GM12878 (cell line): ENCODE measurements at regions of chr7 and their contacts with region 1.

Region 1: GRCh38 chr7:82044497-82045080 is 274.7 kb upstream of the HGF start:
- DNase-seq: no peak
- ATAC-seq: peak; percentile 56
- H3K4me3 ChIP-seq: no peak overlapping the region
- H3K27ac ChIP-seq: no peak overlapping the region
- H3K4me1 ChIP-seq: no peaks in the 10 kb centered on the region
- H3K27me3 ChIP-seq: no peaks in the 10 kb centered on the region
- CTCF ChIP-seq: peak; percentile 42 to 75 (median 47); a peak in 5 of 6 replicates
- EP300 ChIP-seq: no peak
- POLR2A ChIP-seq: no peak
- RAD21 ChIP-seq: peak; percentile 85

Region 2: DNA sequence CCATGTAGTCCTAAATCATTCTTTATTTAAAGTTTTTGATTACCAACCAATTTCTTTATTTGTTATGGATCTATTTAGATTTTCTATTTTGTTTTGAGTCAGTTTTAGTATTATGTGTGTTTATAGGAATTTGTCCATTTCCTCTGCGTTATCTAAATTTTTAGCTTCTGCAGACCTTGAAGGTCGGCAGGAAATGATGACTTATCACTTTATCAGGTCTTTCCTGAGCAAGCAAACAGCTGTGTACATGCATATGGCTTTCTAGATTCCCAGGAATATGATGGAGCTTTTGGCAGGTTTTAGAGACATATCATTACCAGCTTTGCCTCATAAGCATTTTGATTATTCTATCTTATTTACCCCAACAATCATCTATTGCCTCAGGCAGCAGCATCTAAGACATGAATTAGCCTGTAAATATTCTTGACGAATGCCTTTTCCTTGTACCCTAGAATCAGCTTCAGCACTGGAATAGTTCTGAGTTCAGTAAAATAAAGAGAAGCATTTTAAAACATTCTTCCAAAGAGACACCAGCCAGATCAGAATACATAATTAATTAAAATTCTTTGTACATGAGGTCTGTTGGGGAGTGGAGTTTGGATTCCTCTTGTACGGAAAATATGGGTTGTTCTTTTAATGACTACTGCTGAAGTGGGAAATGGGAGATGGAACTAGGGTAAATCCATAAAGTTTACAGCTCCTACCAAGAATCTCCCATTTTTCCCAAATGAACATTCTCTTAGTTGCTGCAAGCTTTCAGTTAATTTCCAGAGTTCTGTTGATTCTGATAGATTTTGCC is 716.9 kb before region 1 on chr7:
- CTCF ChIA-PET with region 1: no interaction called
- POLR2A ChIA-PET with region 1: no interaction called
- RAD21 ChIA-PET with region 1: no interaction called
- SMC1A ChIA-PET with region 1: no interaction called
- in situ Hi-C with region 1: no loop called
- intact Hi-C with region 1: no loop called
- DNase-seq: no peak
- ATAC-seq: no peak
- H3K4me3 ChIP-seq: no peak overlapping the region
- H3K27ac ChIP-seq: no peak overlapping the region
- H3K4me1 ChIP-seq: no peaks in the 10 kb centered on the region
- H3K27me3 ChIP-seq: no peaks in the 10 kb centered on the region
- CTCF ChIP-seq: no peak
- EP300 ChIP-seq: no peak
- POLR2A ChIP-seq: no peak
- RAD21 ChIP-seq: no peak

Region 3: GRCh38 chr7:81769891-81770727 is 274.5 kb before region 1 on chr7 and contains the start of gene HGF:
- CTCF ChIA-PET with region 1: no interaction called
- POLR2A ChIA-PET with region 1: no interaction called
- RAD21 ChIA-PET with region 1: no interaction called
- SMC1A ChIA-PET with region 1: no interaction called
- in situ Hi-C with region 1: no loop called
- intact Hi-C with region 1: no loop called
- DNase-seq: no peak
- ATAC-seq: peak; percentile 67
- H3K4me3 ChIP-seq: peak within 1 kb of the TSS; percentile 43
- H3K27ac ChIP-seq: no peak within 1 kb of the TSS
- H3K4me1 ChIP-seq: no peaks in the 10 kb centered on the region; the same call in 1 of the 2 replicates
- H3K27me3 ChIP-seq: peaks cover 0 to 3% of the 10 kb centered on the region in 2 experiments; a peak in 1 of 4 replicates
- CTCF ChIP-seq: no peak
- EP300 ChIP-seq: no peak
- POLR2A ChIP-seq: no peak
- RAD21 ChIP-seq: no peak
- polyA plus RNA-seq, gene HGF: 1.4 to 1.7 TPM

Region 4: GRCh38 chr7:82105463-82105862 is 60.9 kb after region 1 on chr7:
- CTCF ChIA-PET with region 1: interaction called, 7 read pairs
- POLR2A ChIA-PET with region 1: interaction called, 8 read pairs
- RAD21 ChIA-PET with region 1: interaction called, 45 read pairs
- SMC1A ChIA-PET with region 1: interaction called, 16 read pairs
- in situ Hi-C with region 1: no loop called
- intact Hi-C with region 1: no loop called
- DNase-seq: no peak
- ATAC-seq: peak; percentile 66
- H3K4me3 ChIP-seq: no peak overlapping the region
- H3K27ac ChIP-seq: no peak overlapping the region
- H3K4me1 ChIP-seq: no peaks in the 10 kb centered on the region
- H3K27me3 ChIP-seq: no peaks in the 10 kb centered on the region
- CTCF ChIP-seq: no peak
- EP300 ChIP-seq: no peak
- POLR2A ChIP-seq: no peak
- RAD21 ChIP-seq: no peak

Region 5: GRCh38 chr7:82164813-82165212 is 120.2 kb after region 1 on chr7:
- CTCF ChIA-PET with region 1: interaction called, 12 read pairs
- POLR2A ChIA-PET with region 1: no interaction called
- RAD21 ChIA-PET with region 1: interaction called, 6 read pairs
- SMC1A ChIA-PET with region 1: interaction called, 7 read pairs
- in situ Hi-C with region 1: no loop called
- intact Hi-C with region 1: loop called (anchors 10 kb)
- DNase-seq: no peak
- ATAC-seq: peak; percentile 48; the same call in 2 of the 3 replicates
- H3K4me3 ChIP-seq: no peak overlapping the region
- H3K27ac ChIP-seq: no peak overlapping the region
- H3K4me1 ChIP-seq: no peaks in the 10 kb centered on the region
- H3K27me3 ChIP-seq: no peaks in the 10 kb centered on the region
- CTCF ChIP-seq: no peak; a peak in 1 of 6 replicates
- EP300 ChIP-seq: no peak
- POLR2A ChIP-seq: no peak
- RAD21 ChIP-seq: 0 out of 2 replicates have a peak, but pooled peaks have one; percentile 8

Region 6: GRCh38 chr7:82229164-82229563 is 184.6 kb after region 1 on chr7:
- CTCF ChIA-PET with region 1: interaction called, 14 read pairs
- POLR2A ChIA-PET with region 1: no interaction called
- RAD21 ChIA-PET with region 1: interaction called, 10 read pairs
- SMC1A ChIA-PET with region 1: interaction called, 29 read pairs
- in situ Hi-C with region 1: no loop called
- intact Hi-C with region 1: loop called (anchors 2 kb)
- DNase-seq: no peak
- ATAC-seq: no peak
- H3K4me3 ChIP-seq: no peak overlapping the region
- H3K27ac ChIP-seq: no peak overlapping the region
- H3K4me1 ChIP-seq: no peaks in the 10 kb centered on the region
- H3K27me3 ChIP-seq: no peaks in the 10 kb centered on the region
- CTCF ChIP-seq: no peak
- EP300 ChIP-seq: no peak
- POLR2A ChIP-seq: no peak
- RAD21 ChIP-seq: no peak

Region 7: GRCh38 chr7:82481499-82482097 is 437.0 kb after region 1 on chr7:
- CTCF ChIA-PET with region 1: interaction called, 16 read pairs
- POLR2A ChIA-PET with region 1: no interaction called
- RAD21 ChIA-PET with region 1: interaction called, 10 read pairs
- SMC1A ChIA-PET with region 1: interaction called, 30 read pairs
- in situ Hi-C with region 1: no loop called
- intact Hi-C with region 1: loop called (anchors 2 kb)
- DNase-seq: peak; percentile 0
- ATAC-seq: peak; percentile 86
- H3K4me3 ChIP-seq: no peak overlapping the region
- H3K27ac ChIP-seq: no peak overlapping the region
- H3K4me1 ChIP-seq: no peaks in the 10 kb centered on the region
- H3K27me3 ChIP-seq: no peaks in the 10 kb centered on the region
- CTCF ChIP-seq: peak; percentile 56 to 62 (median 56)
- EP300 ChIP-seq: no peak
- POLR2A ChIP-seq: no peak
- RAD21 ChIP-seq: peak; percentile 56

Region 8: DNA sequence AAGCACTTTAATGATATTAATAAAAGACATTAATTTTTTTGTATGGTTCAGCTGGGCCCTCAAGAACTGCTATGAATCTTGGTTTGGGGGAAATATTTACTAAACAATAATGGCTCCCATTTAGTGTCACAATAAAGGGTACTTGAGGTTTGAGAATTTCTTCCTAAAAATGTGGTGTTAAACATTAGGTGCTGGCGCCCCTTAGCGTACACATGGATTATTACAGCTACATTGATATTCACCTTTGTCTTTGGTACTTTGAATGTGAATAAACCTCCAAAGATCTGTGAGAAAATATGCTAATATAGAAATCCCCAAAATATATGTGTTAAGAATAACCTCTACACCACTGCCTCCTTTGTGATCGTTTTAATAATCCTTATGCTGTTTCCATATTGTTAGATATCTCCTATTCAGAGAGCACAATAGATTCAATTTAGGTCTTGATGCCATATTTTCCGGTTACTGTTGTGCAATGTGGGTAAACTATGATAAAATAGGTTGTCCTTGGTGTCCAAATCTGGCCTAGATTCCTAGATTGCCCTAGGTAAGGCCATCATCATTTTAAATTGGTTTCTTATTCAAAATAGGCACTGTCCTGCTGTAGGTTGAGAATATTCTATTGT is 560.8 kb after region 1 on chr7:
- CTCF ChIA-PET with region 1: interaction called, 117 read pairs
- POLR2A ChIA-PET with region 1: no interaction called
- RAD21 ChIA-PET with region 1: interaction called, 29 read pairs
- SMC1A ChIA-PET with region 1: interaction called, 121 read pairs
- in situ Hi-C with region 1: no loop called
- intact Hi-C with region 1: loop called (anchors 10 kb)
- DNase-seq: no peak
- ATAC-seq: peak; percentile 59; the same call in 2 of the 3 replicates
- H3K4me3 ChIP-seq: no peak overlapping the region
- H3K27ac ChIP-seq: no peak overlapping the region
- H3K4me1 ChIP-seq: no peaks in the 10 kb centered on the region
- H3K27me3 ChIP-seq: no peaks in the 10 kb centered on the region
- CTCF ChIP-seq: peak; percentile 52 to 70 (median 67)
- EP300 ChIP-seq: no peak
- POLR2A ChIP-seq: no peak
- RAD21 ChIP-seq: peak; percentile 73

Region 9: DNA sequence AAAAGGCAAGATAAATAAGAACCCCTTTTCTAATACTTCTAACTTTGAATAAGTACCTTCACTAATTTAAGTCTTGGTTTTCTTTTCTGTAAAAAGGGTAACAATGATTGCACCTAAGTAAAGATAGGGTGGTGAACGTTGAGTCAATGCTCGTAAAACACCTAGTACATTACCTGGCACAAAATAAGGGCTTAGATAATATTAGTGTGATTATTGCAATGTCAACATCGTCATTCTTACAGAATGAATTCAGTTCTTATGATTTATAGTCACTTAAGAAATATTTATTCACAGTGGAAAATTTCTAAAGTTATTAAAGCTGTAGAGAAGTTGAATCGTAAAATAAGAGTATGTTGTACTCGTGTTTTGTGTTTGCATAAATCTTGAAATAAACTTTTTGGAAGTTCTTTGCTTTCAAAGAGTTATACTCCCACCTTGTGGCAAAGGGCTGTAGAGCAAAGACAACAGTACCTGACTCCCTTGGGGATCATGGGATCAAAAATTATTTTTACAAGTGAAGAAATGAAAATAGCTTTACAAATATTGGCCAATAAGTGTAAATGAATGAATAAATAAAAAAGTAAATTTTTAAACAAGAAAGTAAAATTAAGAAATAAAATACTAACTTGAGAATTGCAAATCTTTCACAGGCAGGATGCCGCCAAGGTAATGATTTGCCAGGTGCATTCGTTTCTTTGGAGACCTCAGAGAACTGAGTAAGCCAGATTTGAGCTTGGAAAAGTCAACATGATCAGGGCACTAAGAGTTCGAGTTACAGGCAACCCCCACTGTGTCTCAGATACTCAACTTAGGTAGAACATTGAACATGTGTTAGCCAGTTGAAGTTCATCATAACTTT is 684.8 kb after region 1 on chr7:
- CTCF ChIA-PET with region 1: interaction called, 18 read pairs
- POLR2A ChIA-PET with region 1: no interaction called
- RAD21 ChIA-PET with region 1: interaction called, 5 read pairs
- SMC1A ChIA-PET with region 1: interaction called, 7 read pairs
- in situ Hi-C with region 1: loop called (anchors 10 kb)
- intact Hi-C with region 1: loop called (anchors 5 kb)
- DNase-seq: no peak
- ATAC-seq: peak; percentile 56; the same call in 2 of the 3 replicates
- H3K4me3 ChIP-seq: no peak overlapping the region
- H3K27ac ChIP-seq: no peak overlapping the region
- H3K4me1 ChIP-seq: no peaks in the 10 kb centered on the region
- H3K27me3 ChIP-seq: no peaks in the 10 kb centered on the region
- CTCF ChIP-seq: peak; percentile 55 to 72 (median 56)
- EP300 ChIP-seq: no peak
- POLR2A ChIP-seq: no peak
- RAD21 ChIP-seq: peak; percentile 80